Endothelial cell of umbilical vein (primary cell): ENCODE measurements at regions of chr20 and their contacts with region 1.

Region 1: DNA sequence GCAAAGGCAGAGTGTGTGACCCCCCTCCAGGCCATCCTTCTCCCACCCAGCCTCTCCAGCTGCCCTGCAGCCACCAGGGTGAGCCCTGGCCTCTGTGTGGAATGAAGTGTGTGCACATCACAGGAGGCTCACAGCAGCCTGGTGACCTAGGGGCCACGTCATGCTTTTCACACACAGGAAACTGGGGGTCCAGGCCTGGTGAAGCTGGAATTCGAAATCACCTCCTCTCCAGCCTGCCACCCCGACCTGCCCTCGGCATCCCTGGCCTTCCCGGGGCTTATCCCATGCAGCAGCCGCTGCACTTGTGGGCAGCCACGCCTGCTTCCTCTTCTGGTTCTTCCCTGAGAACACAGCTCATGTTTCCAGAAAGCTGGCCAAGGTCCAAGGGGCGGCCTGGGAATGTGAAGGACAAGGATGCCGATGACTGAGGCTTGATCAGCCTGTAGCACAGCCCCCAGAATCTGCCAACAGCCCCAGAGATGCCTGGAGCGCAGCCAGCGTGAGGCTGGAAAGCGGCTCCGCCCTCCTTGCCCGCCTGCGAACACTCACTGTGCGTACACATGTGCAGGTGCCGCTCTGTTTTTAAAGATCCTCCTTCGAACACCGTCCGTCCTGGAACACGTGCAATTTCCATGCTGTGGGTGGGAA is 4.2 kb upstream of the NTSR1 start:
- DNase-seq: peak; percentile 99
- H3K4me3 ChIP-seq: no peak overlapping the region
- H3K27ac ChIP-seq: peak overlapping the region; percentile 91
- H3K4me1 ChIP-seq: peaks cover 26% of the 10 kb centered on the region
- H3K27me3 ChIP-seq: peaks cover 0 to 14% of the 10 kb centered on the region in 2 experiments
- CTCF ChIP-seq: peak in 1 of 2 donors; percentile 35
- POLR2A ChIP-seq: no peak

Region 2: DNA sequence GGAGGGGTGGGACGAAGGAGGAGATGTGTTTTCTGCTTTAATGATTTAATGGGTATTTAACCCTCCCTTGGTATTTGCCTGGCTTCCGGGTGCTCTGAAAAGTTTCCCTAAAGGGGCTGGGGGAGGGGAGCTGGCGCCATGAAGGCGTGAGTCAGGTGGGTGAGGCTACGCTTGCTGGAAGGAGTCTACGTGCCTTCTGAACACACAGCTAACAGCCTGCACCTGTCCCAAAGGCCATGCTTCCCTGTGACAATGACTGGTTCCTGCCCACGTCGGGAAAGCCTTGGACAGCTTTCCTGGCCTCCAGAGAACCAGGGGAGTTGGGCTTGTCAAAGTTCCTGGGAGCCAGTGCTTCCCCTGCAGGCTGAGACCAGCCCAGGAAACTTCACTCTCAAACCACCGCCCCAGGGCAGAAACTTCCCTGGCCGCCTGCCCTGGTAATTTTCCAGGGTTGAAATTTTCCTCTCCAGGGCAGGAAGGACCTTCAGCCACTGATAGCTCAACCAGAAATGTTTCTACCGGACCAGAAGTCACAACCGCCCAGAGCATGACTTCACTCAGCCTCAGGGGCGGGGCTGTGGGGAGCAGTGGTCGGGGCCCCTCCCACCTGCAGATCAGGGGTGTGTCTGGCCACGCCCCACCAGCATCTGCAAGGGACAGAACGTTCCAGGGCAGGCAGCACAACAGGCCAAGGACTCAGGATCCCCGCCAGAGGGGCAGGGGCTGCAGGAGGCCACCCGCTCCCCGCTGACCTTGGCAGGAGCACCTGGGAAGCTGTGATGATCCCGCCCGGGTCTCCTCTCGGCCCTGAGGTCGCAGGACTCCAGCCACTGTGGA is 80.7 kb before region 1 on chr20:
- CTCF ChIA-PET with region 1: no interaction called
- POLR2A ChIA-PET with region 1: no interaction called
- dilution Hi-C with region 1: no loop called
- intact Hi-C with region 1: loop called (anchors 1 kb)
- DNase-seq: peak; percentile 93
- H3K4me3 ChIP-seq: peak overlapping the region in 1 of 3 experiments; percentile 1
- H3K27ac ChIP-seq: peak overlapping the region; percentile 85
- H3K4me1 ChIP-seq: peaks cover 23% of the 10 kb centered on the region
- H3K27me3 ChIP-seq: no peaks in the 10 kb centered on the region
- CTCF ChIP-seq: no peak
- POLR2A ChIP-seq: peak; percentile 81

Region 3: DNA sequence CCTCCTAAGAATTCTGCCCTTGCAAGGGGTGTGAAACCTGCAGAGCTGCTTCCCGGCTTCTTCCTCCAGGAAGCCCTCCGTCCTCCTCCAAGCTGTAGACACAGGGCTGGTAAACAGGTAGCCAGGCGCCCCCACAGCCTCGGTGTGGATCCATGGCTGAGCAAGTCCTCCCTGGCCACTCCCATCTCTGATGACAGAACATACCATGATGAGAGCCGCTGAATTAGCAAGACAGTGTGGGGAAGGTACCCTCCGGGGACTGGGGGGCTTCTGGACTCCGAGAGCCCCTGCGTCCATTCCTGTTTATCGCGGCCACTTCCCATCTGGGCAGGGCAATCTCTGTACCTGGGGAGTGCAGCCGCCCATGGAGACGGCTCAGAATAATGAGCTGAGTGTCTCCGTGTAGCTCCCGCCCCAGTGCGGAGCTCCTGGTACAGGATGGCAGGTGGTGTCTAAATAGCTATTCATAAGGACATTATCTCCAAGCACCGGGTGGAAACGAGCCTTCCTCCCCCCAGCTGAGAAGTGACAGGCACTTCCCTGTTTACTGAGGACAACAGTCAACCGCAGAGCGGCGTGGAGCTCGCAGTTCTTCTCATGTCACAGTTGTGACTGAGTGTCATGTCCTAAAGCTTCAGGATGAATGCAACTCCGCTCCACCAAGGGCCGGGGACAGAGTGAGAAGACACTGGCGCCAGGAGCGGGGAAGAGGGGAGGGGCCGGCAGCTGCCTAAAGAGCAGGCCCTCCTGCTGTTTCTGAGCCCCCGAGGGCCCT is 18.5 kb before region 1 on chr20:
- CTCF ChIA-PET with region 1: interaction called, 16 read pairs
- POLR2A ChIA-PET with region 1: no interaction called
- dilution Hi-C with region 1: no loop called
- intact Hi-C with region 1: loop called (anchors 2 kb)
- DNase-seq: no peak
- H3K4me3 ChIP-seq: no peak overlapping the region
- H3K27ac ChIP-seq: no peak overlapping the region
- H3K4me1 ChIP-seq: no peaks in the 10 kb centered on the region
- H3K27me3 ChIP-seq: peaks cover 0 to 2% of the 10 kb centered on the region in 2 experiments
- CTCF ChIP-seq: no peak
- POLR2A ChIP-seq: no peak

Region 4: DNA sequence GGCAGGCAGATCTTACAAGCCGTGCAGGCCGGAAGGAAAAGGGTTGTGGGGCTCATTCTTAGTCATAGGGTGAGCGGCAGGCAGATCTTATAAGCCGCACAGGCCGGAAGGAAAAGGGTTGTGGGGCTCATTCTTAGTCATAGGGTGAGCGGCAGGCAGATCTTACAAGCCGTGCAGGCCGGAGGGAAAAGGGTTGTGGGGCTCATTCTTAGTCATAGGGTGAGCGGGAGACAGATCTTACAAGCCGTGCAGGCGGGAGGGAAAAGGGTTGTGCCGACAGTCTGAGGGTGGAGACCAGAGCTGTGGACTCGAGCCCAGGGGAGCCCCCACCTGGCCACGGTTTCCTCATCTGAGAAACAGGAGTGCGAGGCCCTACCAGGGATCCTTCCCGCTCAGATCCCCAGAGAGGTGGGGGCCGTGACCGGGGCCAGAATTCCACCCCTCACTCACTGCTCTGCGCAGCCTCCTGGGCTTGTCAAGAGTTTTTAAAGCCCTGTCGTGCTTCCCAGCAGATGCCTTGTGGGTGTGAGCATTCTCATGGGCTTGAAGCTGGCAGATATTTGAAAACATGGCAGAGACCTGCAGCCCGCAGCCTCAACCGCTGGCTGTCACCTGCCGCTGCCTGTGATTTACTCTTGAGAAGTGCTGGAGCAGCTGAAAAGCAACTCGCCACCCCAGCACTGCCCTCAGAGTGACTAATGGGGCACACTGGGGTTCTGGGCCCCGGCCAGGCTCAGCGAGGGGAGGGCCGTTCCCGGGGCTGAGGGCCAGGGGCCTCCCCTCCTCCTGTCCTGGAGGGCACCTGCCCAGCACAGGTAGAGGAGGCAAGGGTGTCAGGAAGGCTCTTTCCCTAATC is 36.1 kb after region 1 on chr20:
- CTCF ChIA-PET with region 1: interaction called, 24 read pairs
- POLR2A ChIA-PET with region 1: no interaction called
- dilution Hi-C with region 1: no loop called
- intact Hi-C with region 1: loop called (anchors 1 kb)
- DNase-seq: peak; percentile 85
- H3K4me3 ChIP-seq: no peak overlapping the region
- H3K27ac ChIP-seq: peak overlapping the region; percentile 77
- H3K4me1 ChIP-seq: peaks cover 26% of the 10 kb centered on the region
- H3K27me3 ChIP-seq: no peaks in the 10 kb centered on the region
- CTCF ChIP-seq: no peak
- POLR2A ChIP-seq: peak; percentile 30

Region 5: DNA sequence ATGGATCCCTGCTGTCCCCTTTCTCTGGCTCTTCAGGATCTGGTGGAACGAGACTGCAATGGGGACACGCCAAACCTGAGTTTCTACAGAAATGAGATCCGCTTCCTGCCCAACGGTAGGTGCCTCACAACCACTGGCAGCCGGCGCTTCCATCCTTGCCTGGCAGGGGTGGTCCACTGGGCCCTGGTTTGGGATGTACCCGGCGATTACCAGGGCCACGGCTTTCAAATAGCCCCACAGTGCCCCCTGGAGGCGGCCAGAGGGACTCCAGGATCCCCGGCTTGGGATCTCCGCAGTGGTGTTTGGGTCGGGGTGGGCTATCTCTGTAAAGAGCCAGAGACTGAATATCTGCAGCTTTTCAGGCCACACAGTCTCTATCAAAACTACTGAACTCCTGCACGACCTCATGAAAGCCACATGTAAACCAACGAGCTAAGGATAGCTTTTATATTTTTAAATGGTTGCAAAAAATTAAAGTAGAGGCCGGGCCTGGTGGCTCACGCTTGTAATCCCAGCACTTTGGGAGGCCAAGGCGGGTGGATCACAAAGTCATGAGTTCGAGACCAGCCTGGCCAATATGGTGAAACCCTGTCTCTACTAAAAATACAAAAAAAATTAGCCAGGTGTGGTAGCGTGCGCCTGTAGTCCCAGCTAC is 103.9 kb after region 1 on chr20:
- CTCF ChIA-PET with region 1: interaction called, 12 read pairs
- POLR2A ChIA-PET with region 1: no interaction called
- dilution Hi-C with region 1: no loop called
- intact Hi-C with region 1: no loop called
- DNase-seq: peak; percentile 44
- H3K4me3 ChIP-seq: no peak overlapping the region
- H3K27ac ChIP-seq: no peak overlapping the region
- H3K4me1 ChIP-seq: peaks cover 11% of the 10 kb centered on the region
- H3K27me3 ChIP-seq: no peaks in the 10 kb centered on the region
- CTCF ChIP-seq: peak; percentile 78 to 93
- POLR2A ChIP-seq: no peak